Transverse colon (tissue), 4 donors: ENCODE measurements at regions of chr6 and their contacts with region 1.

Region 1: DNA sequence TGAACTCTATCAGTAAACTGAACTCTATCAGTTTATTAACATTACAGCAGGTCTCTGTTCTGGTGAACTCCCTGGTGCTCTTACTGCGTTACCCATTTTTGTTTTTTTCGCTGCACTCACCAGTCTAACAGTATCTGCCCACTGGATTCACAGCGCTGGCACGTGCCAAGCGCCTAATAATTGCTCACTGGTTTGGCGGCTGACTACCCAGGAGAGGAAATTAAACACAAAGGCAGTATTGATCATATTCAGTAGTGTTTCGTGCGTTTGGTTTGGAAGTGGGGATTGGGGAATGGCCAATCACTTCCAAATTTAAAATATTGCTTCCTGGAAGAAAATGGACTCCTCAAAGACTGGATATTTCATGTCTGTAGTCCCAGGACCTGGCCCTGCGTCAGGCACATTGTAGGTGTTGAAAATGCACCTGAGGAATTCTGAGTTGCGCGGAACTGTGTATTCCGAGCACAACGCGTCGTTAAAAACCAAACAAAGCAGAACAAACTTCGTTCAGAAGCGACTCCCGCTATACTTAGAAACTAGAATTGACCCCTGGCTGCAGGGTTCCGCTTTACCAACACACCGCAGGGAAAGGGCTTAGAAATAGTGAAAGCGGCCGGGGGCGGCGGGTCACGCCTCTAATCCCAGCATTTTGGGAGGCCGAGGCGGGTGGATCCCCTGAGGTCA is 1.1 kb upstream of the RPS12 start:
- DNase-seq: peak; percentile 49
- H3K4me3 ChIP-seq: peak overlapping the region; percentile 62 to 90 (median 80)
- H3K27ac ChIP-seq: peak overlapping the region; percentile 88 to 95 (median 93)
- H3K4me1 ChIP-seq: peaks cover 14 to 36% (median 19%) of the 10 kb centered on the region in 4 donors
- H3K27me3 ChIP-seq: no peaks in the 10 kb centered on the region
- CTCF ChIP-seq: peak in 1 of 5 experiments; percentile 12
- EP300 ChIP-seq: no peak
- POLR2A ChIP-seq: peak; percentile 44

Region 2: DNA sequence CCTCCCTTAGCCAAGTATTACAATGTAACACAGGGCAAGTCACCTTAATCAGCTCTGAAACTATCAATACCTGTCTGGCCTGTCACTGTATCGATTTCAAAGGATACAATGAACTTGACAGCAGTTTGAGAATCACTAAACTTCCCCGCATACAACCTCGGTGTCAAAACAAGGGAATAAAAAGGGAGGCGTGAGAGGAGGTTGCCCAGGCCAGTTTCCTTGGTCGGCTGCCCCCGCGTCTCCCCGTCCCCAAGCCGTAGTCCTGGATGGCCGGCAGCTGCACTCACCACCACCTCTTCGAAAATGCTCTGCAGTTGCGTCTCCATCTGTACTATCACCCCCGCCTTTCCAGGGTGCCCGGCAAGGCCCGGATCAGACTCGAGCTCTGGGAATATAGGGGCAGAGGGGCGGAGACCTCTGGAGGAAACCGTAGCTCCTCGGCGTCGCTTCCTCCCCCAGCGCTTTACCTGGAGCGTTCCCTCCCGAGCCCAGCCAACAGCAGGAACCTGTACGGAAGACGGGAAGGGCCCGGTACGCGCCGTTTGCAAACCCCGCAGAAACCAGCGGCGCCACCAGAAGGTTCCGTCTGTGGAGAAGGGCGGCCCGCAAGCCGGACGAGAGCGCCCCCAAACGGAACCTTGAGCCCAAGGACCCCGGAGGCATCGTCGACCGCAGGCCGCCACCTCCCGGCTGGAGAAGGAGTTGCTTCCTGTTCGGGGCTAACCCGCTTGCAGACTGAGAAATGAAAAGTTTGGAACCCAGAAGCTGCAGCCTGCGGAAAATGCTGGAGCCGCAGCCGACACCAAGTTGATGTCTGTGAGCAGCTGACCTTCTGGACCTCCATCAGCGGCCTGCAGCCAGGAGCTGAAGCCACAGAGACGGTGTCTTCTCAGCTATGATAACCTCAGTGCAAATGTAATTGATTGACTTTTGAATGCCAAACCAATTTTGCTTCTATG is 1185.3 kb before region 1 on chr6 and contains the start of gene MED23:
- in situ Hi-C with region 1: loop called in 1 of 4 experiments (anchors 25 kb)
- intact Hi-C with region 1: no loop called
- DNase-seq: peak; percentile 97
- H3K4me3 ChIP-seq: peak within 1 kb of the TSS; percentile 61 to 84 (median 79)
- H3K27ac ChIP-seq: peak within 1 kb of the TSS; percentile 87 to 89 (median 88)
- H3K4me1 ChIP-seq: peaks cover 7 to 31% (median 16%) of the 10 kb centered on the region in 4 donors
- H3K27me3 ChIP-seq: no peaks in the 10 kb centered on the region
- CTCF ChIP-seq: peak; percentile 85 to 92 (median 89)
- EP300 ChIP-seq: no peak
- POLR2A ChIP-seq: peak; percentile 75
- total RNA-seq, gene MED23: 11.6 to 47.6 (median 37.9) TPM